ENCODE measurements at regions of chr6 and their contacts with region 1.

Region 1: DNA sequence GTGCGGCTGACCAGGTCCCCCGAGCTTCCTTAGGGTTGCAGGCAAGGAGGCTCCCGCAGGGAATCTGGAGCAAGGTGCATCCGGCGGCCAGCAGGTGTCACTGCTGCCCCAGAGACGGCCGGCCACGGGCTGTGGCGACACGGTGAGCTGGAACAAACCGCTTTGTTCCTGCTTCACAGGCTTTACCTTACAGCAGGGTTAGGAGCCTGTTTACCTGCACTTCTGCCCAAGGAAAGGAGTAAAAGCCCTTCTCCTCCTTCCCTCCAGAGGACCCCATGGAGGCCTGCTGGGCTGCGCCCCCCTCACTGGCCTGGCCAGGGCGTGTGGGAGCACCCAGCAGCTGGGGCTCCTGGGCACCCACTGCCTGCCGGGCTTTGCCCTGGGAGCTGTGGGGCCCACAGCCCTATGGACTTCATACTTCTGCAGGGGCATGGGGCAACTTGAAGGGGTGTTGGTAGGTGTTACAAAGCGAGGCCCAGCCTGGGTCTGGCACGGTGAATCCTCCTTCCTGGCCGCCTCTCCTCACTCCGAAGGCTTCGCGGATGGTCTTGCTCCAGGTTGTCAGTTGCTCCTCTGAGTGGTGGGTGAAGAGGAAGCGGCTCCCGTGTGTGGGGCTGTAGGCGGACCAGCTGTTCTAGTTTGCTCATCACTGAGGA is 88.4 kb downstream of the CDC5L start:
- DNase-seq: peak; percentile 79
- H3K4me3 Mint-ChIP-seq: no peak overlapping the region
- H3K27ac Mint-ChIP-seq: no peak overlapping the region
- H3K4me1 Mint-ChIP-seq: no peaks in the 10 kb centered on the region
- H3K27me3 Mint-ChIP-seq: peaks cover 47% of the 10 kb centered on the region

Region 2: GRCh38 chr6:44127186-44128019 is 348.5 kb before region 1 on chr6 and contains the starts of genes MRPL14 and TMEM63B:
- CTCF ChIA-PET with region 1: no interaction called
- DNase-seq: peak; percentile 89
- H3K4me3 Mint-ChIP-seq: peak within 1 kb of the TSS; percentile 88
- H3K27ac Mint-ChIP-seq: peak within 1 kb of the TSS; percentile 94
- H3K4me1 Mint-ChIP-seq: peaks cover 61% of the 10 kb centered on the region
- H3K27me3 Mint-ChIP-seq: peaks cover 7% of the 10 kb centered on the region

Region 3: DNA sequence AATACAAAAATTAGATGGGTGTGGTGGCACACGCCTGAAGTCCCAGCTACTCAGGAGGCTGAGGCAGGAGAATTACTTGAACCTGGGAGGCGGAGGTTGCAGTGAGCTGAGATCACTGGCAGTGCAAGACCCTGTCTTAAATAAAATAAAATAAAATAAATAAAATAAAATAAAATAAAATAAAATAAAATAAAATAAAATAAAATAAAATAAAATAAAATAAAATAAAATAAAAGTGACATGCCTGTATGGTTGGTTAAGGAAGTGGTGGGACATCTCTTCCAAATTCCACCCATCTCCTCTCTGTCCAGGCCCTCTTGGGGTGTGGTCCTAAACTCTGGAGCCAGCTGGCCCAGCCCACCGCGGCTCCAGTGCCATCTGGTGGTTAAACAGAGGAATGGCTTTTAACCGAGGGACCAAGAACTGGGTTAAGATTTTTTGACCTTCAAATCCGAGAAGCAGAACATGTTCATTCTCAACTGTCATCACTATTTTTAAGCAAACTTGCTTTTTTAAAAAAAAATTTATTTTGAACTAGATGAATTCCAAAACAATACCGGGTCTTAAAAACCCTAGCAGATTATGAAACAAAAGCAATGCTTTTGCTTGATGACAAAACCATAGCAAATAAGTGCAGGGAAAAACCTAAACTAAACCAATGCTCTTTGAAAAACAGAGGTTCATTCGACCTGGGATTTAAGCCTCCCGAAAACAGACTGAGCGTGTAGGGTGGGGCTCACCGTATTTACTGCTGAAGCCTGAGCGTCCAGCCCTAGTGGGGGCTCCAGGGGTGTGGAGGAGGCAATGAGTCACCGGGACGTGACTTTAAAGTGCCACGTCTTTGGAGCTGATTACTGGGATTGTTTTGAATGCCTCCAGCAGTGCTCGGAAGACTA is 19.6 kb before region 1 on chr6:
- CTCF ChIA-PET with region 1: interaction called, 39 read pairs
- DNase-seq: peak; percentile 47
- H3K4me3 Mint-ChIP-seq: no peak overlapping the region
- H3K27ac Mint-ChIP-seq: no peak overlapping the region
- H3K4me1 Mint-ChIP-seq: no peaks in the 10 kb centered on the region
- H3K27me3 Mint-ChIP-seq: peaks cover 31% of the 10 kb centered on the region

Region 4: DNA sequence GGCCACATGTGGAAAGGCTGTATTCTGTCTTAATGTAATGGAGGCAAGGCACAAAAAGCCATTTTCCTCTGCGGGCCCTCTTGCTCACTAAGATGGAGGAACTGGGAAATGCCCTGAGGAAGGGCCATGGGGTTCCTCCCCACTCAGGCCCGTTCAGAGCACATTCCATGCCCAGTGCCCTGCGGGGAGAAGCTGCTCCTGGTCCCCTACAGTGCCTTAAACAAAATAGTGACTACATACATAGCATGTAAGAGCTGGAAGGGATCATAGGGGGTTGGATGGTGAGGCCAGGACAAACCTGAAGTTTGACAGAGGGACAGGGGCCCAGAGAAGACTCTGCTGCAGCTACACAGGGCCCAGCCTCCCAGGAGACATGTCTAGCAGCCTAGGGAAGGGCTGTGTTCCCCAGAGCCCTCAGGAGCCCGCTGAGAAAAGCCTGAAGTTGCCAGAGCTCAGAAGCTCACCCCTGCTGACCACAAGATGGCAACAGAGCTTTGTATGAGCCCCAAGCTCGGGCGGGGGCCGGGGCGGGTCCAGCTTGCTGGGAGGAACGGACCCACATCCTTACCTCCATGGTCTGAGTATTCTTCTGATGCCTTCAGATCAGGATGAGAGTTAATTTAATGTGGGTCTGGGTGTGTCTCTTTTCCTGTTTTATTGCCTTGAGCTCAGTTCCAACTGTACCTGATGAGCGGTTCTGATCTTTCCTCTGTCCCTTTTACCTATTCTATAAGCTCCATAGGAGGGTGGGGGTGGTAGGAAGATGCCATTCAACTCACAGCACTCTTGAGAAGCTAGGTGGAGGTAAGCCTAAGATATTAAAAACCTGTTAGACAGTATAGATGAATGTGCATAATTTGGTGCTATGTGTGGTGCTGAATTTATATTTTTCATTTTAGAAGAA is 154.5 kb after region 1 on chr6:
- CTCF ChIA-PET with region 1: interaction called, 16 read pairs
- DNase-seq: peak; percentile 53
- H3K4me3 Mint-ChIP-seq: no peak overlapping the region
- H3K27ac Mint-ChIP-seq: no peak overlapping the region
- H3K4me1 Mint-ChIP-seq: peaks cover 24% of the 10 kb centered on the region
- H3K27me3 Mint-ChIP-seq: peaks cover 20% of the 10 kb centered on the region

Region 5: DNA sequence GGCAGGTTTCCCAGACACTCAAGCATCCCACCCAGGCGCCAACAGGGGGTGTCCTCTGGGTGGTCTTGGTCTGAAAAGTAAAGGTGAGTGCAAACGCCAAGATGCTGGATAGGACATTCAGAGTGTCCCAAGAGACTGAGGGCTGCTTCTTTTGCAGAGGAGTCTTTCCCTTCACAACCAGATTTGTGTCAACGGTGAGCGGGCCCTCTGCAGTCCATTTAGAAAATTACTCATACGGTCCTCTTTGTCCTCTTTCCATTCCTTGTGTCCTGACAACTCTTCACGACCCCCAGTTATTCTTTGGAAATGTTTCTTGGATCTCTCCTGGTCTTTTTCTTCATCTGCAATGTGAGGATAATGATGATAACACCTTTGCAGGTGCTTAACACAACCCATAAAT is 169.4 kb after region 1 on chr6:
- CTCF ChIA-PET with region 1: interaction called, 16 read pairs
- DNase-seq: no peak
- H3K4me3 Mint-ChIP-seq: no peak overlapping the region
- H3K27ac Mint-ChIP-seq: no peak overlapping the region
- H3K4me1 Mint-ChIP-seq: peaks cover 5% of the 10 kb centered on the region
- H3K27me3 Mint-ChIP-seq: peaks cover 3% of the 10 kb centered on the region